Activated CD4-positive, alpha-beta T cell treated with anti-CD3 and anti-CD28 coated beads for 36 hours (primary cell): ENCODE measurements at regions of chr2 and their contacts with region 1.

Region 1: DNA sequence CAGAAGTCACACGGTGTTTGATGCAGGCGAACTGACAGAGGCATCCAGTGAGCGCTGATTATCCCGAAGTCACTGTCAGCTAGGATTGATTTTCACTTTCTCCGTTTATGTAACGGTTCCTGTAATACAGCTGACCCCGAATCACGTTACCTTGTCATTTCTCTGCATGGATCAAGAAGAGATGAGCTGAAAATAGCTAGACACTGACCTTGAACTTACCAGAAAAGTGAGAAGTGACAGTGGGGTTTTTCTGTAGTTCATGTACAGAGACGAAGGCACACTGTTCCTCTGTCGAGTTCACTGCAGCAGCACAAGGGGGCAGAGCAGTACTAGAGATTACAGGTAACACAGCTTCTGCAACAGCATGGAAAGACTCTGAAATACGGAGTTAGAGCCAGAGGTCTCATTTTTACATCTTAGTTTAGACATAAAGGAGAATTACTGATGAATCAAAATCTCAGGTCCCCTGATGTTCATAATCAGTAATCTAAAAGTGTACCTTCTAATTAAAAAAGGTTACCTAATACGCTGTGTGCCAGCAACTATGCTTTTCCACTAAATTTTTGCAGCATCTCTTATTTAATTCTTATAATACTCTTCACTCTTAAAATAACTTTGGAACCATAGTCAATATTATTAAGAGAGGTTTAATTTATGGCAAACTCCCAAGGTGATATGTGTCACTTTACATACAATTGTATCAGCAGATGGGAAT is 33.1 kb downstream of the ARHGAP15 start:
- DNase-seq: peak; percentile 74
- ATAC-seq: peak; percentile 95
- H3K4me3 Mint-ChIP-seq: no peak overlapping the region
- H3K27ac Mint-ChIP-seq: peak overlapping the region; percentile 29
- H3K4me1 Mint-ChIP-seq: peaks cover 83% of the 10 kb centered on the region
- H3K27me3 Mint-ChIP-seq: no peaks in the 10 kb centered on the region

Region 2: GRCh38 chr2:141899740-141900139 is 1262.5 kb before region 1 on chr2:
- CTCF ChIA-PET with region 1: no interaction called
- POLR2A ChIA-PET with region 1: no interaction called
- intact Hi-C with region 1: no loop called
- DNase-seq: no peak
- ATAC-seq: no peak
- H3K4me3 Mint-ChIP-seq: no peak overlapping the region
- H3K27ac Mint-ChIP-seq: no peak overlapping the region
- H3K4me1 Mint-ChIP-seq: no peaks in the 10 kb centered on the region
- H3K27me3 Mint-ChIP-seq: no peaks in the 10 kb centered on the region

Region 3: GRCh38 chr2:143034292-143035074 is 127.8 kb before region 1 on chr2:
- CTCF ChIA-PET with region 1: interaction called, 5 read pairs
- POLR2A ChIA-PET with region 1: no interaction called
- intact Hi-C with region 1: loop called (anchors 5 kb)
- DNase-seq: peak; percentile 68
- ATAC-seq: peak; percentile 90
- H3K4me3 Mint-ChIP-seq: no peak overlapping the region
- H3K27ac Mint-ChIP-seq: no peak overlapping the region
- H3K4me1 Mint-ChIP-seq: peaks cover 9% of the 10 kb centered on the region
- H3K27me3 Mint-ChIP-seq: peaks cover 2% of the 10 kb centered on the region

Region 4: DNA sequence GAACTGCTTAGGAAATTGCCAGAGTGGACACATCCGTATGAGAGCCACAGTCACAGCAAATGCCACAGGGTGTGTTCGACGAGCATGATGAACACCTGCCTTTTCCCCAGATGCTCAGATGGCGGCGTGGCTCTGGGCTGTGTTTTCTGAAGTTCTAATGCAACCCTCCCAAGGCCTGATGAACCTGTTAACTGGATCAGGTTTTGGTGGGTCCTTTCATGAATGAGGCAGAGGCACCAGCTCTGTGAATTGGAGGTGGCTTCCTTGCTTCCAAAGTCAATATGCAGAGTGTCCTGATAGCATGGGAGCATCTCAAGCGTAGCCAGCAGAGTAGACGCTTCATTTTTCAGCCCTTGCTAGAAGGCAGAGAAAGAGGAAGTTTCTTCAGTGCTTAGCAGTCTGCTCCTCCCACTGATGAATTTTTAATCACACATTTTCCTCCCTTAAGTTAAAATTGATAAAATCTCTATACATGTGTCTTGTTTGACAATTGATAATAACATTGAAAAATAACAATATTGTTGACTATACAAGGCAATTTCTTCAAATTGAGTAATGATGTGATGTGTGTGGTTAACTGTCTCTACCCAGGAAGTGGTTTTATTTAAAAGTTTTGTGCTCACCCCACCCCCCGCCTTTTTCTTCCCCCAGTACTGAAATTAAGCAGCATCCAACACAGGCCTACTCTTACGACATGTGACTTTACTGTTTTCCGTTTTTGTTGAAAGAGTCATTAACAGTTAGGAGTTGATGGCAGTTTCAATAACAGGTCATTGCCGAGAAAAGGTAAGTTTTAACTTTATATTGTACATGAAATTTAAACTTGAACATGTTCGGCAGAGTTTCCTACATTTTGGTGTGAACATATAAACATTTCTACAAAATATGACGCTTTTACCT is 33.3 kb before region 1 on chr2 and contains the start of gene ARHGAP15:
- CTCF ChIA-PET with region 1: interaction called, 22 read pairs
- POLR2A ChIA-PET with region 1: no interaction called
- intact Hi-C with region 1: no loop called
- DNase-seq: peak; percentile 83
- ATAC-seq: peak; percentile 81
- H3K4me3 Mint-ChIP-seq: peak within 1 kb of the TSS; percentile 71
- H3K27ac Mint-ChIP-seq: peak within 1 kb of the TSS; percentile 99
- H3K4me1 Mint-ChIP-seq: peaks cover 34% of the 10 kb centered on the region
- H3K27me3 Mint-ChIP-seq: no peaks in the 10 kb centered on the region
- total RNA-seq, gene ARHGAP15: 62.6 to 64.3 TPM

Region 5: DNA sequence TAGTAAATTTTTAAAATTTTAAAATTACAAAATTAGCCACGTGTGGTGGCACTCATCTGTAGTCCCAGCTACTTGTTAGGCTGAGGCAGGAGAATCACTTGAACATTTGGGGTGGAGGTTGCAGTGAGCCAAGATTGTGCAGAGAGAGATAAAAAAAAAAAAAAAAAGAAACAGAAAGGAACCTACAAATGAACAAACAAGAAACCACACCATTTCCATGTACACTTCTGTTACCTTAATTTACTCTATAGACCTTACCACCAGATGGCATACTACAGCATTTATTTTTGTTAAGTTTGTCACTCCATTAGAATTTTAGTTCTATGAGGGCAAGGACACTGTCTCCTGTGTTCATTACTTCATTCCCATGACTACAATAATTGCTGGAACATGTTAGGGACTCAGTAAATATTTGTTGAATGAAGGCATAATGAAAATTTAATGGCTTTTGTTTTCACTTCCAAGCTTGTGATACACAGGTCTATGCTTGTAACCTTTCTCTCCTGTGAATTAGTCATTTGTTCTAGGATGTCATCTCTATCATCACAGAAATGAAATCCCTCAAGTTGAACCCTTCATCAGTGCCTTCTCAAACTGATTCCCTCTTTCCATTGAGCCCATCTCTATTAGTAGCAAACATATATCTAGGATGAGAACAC is 43.0 kb after region 1 on chr2:
- CTCF ChIA-PET with region 1: interaction called, 17 read pairs
- POLR2A ChIA-PET with region 1: no interaction called
- intact Hi-C with region 1: loop called in 1 of 2 experiments (anchors 5 kb)
- DNase-seq: no peak
- ATAC-seq: peak; percentile 83
- H3K4me3 Mint-ChIP-seq: no peak overlapping the region
- H3K27ac Mint-ChIP-seq: peak overlapping the region; percentile 73
- H3K4me1 Mint-ChIP-seq: peaks cover 50% of the 10 kb centered on the region
- H3K27me3 Mint-ChIP-seq: no peaks in the 10 kb centered on the region

Region 6: DNA sequence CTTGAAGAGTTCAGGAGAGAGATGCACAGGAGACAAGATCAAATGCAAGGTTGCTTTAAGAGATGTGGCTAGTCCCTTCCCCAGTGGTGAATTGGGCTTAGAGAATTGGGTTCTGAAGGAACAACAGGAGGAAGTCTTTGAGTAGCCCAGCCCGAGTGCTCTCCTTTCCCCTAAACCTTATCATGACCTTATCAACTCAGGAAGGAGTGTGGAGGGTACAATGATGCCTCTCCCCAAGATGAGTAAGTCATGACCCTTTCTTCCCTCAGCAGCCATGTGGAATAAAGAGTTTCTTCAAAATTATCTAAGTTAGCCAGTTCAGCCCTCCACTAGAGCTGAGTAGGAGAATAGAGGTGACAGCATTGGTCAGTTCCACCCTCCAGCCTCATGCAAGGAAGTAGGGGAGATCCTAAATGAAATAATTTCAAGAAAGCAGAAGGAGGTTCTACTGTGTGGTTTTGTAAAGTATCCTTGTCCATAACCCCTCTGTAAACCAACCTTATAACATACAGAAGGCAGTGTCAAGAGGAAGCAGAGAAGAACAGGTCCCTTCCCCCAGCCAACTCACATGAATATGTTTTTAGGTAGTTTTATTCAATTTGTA is 55.3 kb after region 1 on chr2:
- CTCF ChIA-PET with region 1: interaction called, 52 read pairs
- POLR2A ChIA-PET with region 1: no interaction called
- intact Hi-C with region 1: loop called (anchors 1 kb)
- DNase-seq: no peak
- ATAC-seq: peak; percentile 36
- H3K4me3 Mint-ChIP-seq: no peak overlapping the region
- H3K27ac Mint-ChIP-seq: peak overlapping the region; percentile 40
- H3K4me1 Mint-ChIP-seq: peaks cover 32% of the 10 kb centered on the region
- H3K27me3 Mint-ChIP-seq: no peaks in the 10 kb centered on the region

Region 7: DNA sequence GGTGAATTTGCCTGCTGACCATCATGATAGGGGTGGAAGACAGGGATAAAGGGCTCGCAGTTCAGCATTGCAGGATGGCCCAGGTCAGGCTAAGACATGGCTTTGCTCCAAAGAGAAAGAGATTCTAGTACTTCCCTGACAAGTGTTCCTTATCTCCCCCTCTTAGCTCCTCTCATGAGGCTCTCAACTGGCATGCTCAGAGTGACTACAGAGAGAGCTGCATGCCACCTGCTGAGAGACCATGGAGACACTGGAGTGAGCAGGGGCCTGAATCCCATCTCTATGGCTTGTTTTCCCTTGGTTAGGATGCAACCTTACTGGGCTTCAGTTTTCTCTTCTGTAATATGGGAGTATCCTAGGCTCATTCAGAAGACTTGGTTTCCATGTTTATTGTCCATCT is 61.3 kb after region 1 on chr2:
- CTCF ChIA-PET with region 1: interaction called, 52 read pairs
- POLR2A ChIA-PET with region 1: no interaction called
- intact Hi-C with region 1: loop called (anchors 1 kb)
- DNase-seq: no peak
- ATAC-seq: no peak
- H3K4me3 Mint-ChIP-seq: no peak overlapping the region
- H3K27ac Mint-ChIP-seq: no peak overlapping the region
- H3K4me1 Mint-ChIP-seq: peaks cover 47% of the 10 kb centered on the region
- H3K27me3 Mint-ChIP-seq: no peaks in the 10 kb centered on the region

Region 8: GRCh38 chr2:143284087-143284675 is 121.9 kb after region 1 on chr2:
- CTCF ChIA-PET with region 1: interaction called, 23 read pairs
- POLR2A ChIA-PET with region 1: interaction called, 5 read pairs
- intact Hi-C with region 1: no loop called
- DNase-seq: peak; percentile 42
- ATAC-seq: peak; percentile 67
- H3K4me3 Mint-ChIP-seq: no peak overlapping the region
- H3K27ac Mint-ChIP-seq: peak overlapping the region; percentile 3
- H3K4me1 Mint-ChIP-seq: peaks cover 27% of the 10 kb centered on the region
- H3K27me3 Mint-ChIP-seq: no peaks in the 10 kb centered on the region

Region 9: GRCh38 chr2:143786026-143786765 is 623.9 kb after region 1 on chr2:
- CTCF ChIA-PET with region 1: no interaction called
- POLR2A ChIA-PET with region 1: no interaction called
- intact Hi-C with region 1: no loop called
- DNase-seq: no peak
- ATAC-seq: no peak
- H3K4me3 Mint-ChIP-seq: no peak overlapping the region
- H3K27ac Mint-ChIP-seq: no peak overlapping the region
- H3K4me1 Mint-ChIP-seq: no peaks in the 10 kb centered on the region
- H3K27me3 Mint-ChIP-seq: peaks cover 20% of the 10 kb centered on the region